Posterior vena cava (tissue), 2 donors: ENCODE measurements at regions of chr4 and their contacts with region 1.

Region 1: GRCh38 chr4:118981839-118982381 is 93.3 kb downstream of the SYNPO2 start:
- DNase-seq: no peak

Region 2: DNA sequence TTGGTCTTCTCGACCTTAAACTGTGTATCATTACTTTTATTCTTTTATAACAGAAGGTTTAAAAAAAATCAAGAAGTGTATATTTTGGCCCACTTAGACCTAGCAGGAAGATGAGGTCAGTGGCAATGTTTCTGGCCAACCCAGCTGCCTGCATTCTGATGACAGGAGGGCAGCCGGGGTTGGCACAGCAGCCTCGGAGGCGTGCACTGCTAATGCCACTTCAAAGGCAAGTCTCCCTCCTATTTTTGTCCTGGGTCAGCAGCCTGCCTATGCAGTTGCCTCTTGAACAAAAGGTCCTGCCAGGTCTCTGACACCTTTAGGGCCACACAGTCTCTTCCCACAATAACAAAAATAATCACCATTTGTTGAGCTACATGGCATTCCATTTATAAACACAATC is 64.4 kb after region 1 on chr4:
- intact Hi-C with region 1: no loop called
- DNase-seq: no peak

Region 3: GRCh38 chr4:119103263-119103662 is 121.4 kb after region 1 on chr4:
- intact Hi-C with region 1: loop called in 1 of 2 experiments (anchors 10 kb)
- DNase-seq: no peak

Region 4: DNA sequence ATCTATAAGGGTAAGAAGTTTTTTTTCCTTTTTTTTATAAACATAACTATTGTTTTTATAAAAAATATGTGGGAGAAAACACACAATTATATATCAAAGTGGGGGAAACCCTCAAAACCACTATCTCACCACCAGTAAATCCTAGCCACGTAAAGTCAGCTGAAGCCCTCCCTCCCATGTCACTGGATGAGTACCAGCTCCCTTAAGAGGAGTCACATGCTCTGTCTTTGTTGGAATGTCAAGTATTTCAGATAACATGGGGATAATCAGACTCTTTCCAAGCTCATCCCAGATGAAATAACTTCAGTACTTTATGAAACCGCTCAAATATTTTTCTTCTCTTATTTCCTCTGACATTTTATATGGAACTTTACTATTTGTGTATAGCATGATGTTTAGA is 156.1 kb after region 1 on chr4:
- intact Hi-C with region 1: loop called in 1 of 2 experiments (anchors 10 kb)
- DNase-seq: no peak

Region 5: DNA sequence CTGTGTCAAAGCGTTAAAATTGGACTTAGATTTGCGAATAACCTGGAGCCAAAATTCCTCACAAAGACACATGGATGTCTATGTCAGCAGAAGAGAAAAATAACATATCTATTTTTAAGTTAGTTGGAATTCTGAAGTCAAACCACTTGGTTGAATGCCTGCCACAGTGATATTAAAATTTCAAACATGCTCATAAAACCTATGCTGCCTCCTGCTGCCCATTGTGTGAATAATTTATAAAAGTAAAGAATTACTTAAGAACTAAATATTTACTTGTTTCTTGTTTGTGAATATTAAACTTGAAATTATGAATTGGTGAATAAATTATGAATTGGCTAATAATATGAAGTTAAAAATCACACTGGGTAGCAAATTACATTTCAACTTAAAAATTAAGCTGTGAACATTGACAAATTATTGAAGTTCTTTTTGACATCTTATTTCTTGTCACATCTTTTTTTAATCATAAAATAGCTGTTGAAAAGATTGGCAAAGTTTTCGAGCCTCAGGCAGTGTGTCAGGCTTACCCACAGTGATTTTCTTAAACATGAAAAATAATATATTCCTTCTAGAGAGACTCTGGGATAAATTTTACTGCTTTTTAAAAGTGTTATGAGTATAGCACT is 304.6 kb after region 1 on chr4:
- intact Hi-C with region 1: loop called (anchors 5 to 10 kb)
- DNase-seq: no peak